ENCODE measurements at regions of chrX and their contacts with region 1.

Region 1: GRCh38 chrX:154748712-154749343 is 2.0 kb downstream of the GAB3 start:
- DNase-seq: peak; percentile 34
- H3K4me3 Mint-ChIP-seq: peak overlapping the region; percentile 82
- H3K27ac Mint-ChIP-seq: peak overlapping the region; percentile 40
- H3K4me1 Mint-ChIP-seq: peaks cover 30% of the 10 kb centered on the region
- H3K27me3 Mint-ChIP-seq: peaks cover 3% of the 10 kb centered on the region

Region 2: GRCh38 chrX:154734061-154734781 is 14.6 kb before region 1 on chrX:
- intact Hi-C with region 1: loop called (anchors 1 kb)
- DNase-seq: no peak
- H3K4me3 Mint-ChIP-seq: peak overlapping the region; percentile 77
- H3K27ac Mint-ChIP-seq: peak overlapping the region; percentile 96
- H3K4me1 Mint-ChIP-seq: peaks cover 94% of the 10 kb centered on the region
- H3K27me3 Mint-ChIP-seq: no peaks in the 10 kb centered on the region

Region 3: DNA sequence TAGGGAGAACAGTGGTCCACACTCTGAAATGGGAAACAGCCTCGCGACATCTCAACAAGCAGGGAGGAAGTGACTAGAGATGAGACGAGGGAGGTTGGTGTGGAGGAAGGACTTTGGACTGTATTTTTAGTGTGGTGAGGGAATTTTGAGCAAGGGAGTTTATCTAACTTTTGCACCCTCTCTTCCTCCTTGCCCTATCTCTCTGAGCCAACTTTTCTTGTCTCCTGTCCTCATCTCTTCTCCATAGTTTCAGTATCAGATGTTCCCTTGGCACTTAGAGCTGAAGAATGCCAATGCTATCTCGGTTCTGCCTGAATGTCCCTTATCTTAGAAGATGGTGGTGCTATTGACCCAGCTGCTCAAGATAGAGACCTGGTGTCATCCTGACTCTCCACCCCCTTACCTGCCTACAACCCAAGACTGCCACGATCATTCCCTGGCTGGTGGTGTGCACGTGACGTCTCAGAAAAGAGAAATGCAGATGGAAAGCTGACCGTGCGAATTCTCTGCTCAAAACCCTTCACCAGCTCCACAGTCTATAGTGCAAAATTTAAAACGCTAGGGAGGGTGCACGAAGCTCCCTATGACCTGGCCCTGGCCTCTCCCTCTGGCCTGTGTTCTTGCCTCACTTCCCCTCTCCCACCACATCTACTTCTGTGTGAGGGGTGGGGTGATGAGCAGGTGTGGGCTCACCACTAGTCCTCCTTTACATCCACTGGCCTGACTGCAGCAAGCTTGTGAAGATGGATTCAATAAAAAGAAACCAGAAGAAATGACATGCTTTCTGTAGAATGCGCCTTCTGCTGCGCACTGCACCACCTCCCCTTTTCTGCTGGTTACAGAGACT is 35.5 kb after region 1 on chrX:
- intact Hi-C with region 1: no loop called
- DNase-seq: no peak
- H3K4me3 Mint-ChIP-seq: peak overlapping the region; percentile 16
- H3K27ac Mint-ChIP-seq: peak overlapping the region; percentile 46
- H3K4me1 Mint-ChIP-seq: peaks cover 28% of the 10 kb centered on the region
- H3K27me3 Mint-ChIP-seq: no peaks in the 10 kb centered on the region

Region 4: GRCh38 chrX:154840856-154841255 is 92.0 kb after region 1 on chrX:
- intact Hi-C with region 1: loop called (anchors 1 kb)
- DNase-seq: no peak
- H3K4me3 Mint-ChIP-seq: no peak overlapping the region
- H3K27ac Mint-ChIP-seq: no peak overlapping the region
- H3K4me1 Mint-ChIP-seq: peaks cover 8% of the 10 kb centered on the region
- H3K27me3 Mint-ChIP-seq: peaks cover 6% of the 10 kb centered on the region